ENCODE measurements at regions of chr9 and their contacts with region 1.

Region 1: GRCh38 chr9:33404788-33405362 is 2.5 kb upstream of the AQP7 start:
- DNase-seq: no peak
- ATAC-seq: no peak
- H3K4me3 Mint-ChIP-seq: no peak overlapping the region
- H3K27ac Mint-ChIP-seq: no peak overlapping the region
- H3K4me1 Mint-ChIP-seq: no peaks in the 10 kb centered on the region
- H3K27me3 Mint-ChIP-seq: no peaks in the 10 kb centered on the region

Region 2: GRCh38 chr9:33239921-33240320 is 165.0 kb before region 1 on chr9 and contains the start of gene SPINK4:
- CTCF ChIA-PET with region 1: no interaction called
- DNase-seq: no peak
- ATAC-seq: no peak
- H3K4me3 Mint-ChIP-seq: no peak within 1 kb of the TSS
- H3K27ac Mint-ChIP-seq: peak within 1 kb of the TSS; percentile 17
- H3K4me1 Mint-ChIP-seq: peaks cover 8% of the 10 kb centered on the region
- H3K27me3 Mint-ChIP-seq: peaks cover 7% of the 10 kb centered on the region
- total RNA-seq, gene SPINK4: not detected

Region 3: DNA sequence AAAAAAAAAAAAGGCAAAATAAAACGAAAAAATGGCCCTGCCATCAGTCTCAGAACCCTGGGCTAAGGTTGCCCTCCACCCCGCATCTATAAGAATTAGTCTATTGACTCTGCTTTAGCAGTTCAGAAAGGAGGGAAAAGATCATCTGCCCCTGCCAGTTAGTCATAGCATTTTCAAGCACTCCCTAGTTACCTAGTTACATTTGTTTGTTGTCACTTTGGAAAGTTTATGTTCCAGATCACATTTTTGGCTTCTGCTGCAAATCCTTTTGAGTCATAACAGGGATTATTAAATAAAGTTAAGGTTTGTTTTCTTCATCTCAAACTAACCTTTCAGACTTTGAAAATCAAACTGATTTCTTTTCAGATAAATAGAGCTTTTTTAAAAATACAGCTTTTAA is 54.6 kb before region 1 on chr9:
- CTCF ChIA-PET with region 1: no interaction called
- DNase-seq: no peak
- ATAC-seq: no peak
- H3K4me3 Mint-ChIP-seq: no peak overlapping the region
- H3K27ac Mint-ChIP-seq: peak overlapping the region; percentile 12
- H3K4me1 Mint-ChIP-seq: no peaks in the 10 kb centered on the region
- H3K27me3 Mint-ChIP-seq: no peaks in the 10 kb centered on the region

Region 4: GRCh38 chr9:33458444-33458843 is 53.6 kb after region 1 on chr9:
- CTCF ChIA-PET with region 1: interaction called, 135 read pairs
- DNase-seq: peak; percentile 70
- ATAC-seq: peak; percentile 74
- H3K4me3 Mint-ChIP-seq: no peak overlapping the region
- H3K27ac Mint-ChIP-seq: peak overlapping the region; percentile 79
- H3K4me1 Mint-ChIP-seq: peaks cover 46% of the 10 kb centered on the region
- H3K27me3 Mint-ChIP-seq: no peaks in the 10 kb centered on the region

Region 5: DNA sequence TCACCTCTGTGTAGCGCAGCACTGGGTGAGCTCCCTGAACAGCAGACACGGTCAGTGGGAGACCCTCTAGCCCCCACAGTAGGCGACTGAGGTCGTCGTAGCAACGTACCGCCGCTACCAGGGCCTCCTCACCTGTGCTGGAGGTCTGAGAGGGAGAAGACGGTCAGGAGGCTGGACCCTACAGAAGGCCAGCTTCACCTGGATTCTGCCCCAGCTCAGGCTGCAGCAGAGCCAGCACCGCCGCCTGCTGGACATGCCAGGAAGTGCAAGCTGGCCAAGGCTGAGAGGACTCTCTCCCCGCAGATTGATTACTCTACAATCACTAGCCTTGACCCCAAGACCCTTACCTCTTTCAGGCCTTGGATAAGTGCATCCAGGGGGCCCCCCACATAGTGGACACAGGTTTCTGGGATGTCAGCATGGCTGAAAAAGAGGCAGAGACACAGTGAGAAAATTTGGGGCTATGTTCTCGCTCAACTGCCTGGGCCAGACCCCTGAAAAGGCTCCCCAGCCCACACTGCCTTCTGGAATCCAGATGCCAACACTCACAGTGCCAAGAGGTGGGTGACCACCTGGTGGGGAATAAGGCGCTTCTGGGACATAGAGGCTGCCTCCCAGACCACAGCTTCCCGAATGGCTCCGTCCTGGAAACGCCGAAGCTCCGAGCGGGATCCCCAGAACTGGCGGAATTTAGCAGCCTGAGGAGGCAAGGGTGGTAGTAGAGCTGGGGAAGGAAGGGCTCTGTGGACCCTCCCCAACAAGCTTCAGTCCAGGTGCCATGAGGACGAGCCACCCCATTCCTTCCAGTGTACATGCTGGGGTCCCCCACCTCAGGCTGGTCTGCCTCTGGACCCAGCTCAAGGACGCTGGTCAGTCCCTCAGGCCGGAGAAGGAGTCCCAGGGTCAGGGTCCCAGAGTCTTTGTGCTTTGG is 62.0 kb after region 1 on chr9:
- CTCF ChIA-PET with region 1: interaction called, 78 read pairs
- DNase-seq: peak; percentile 78
- ATAC-seq: peak; percentile 81
- H3K4me3 Mint-ChIP-seq: no peak overlapping the region
- H3K27ac Mint-ChIP-seq: no peak overlapping the region
- H3K4me1 Mint-ChIP-seq: peaks cover 8% of the 10 kb centered on the region
- H3K27me3 Mint-ChIP-seq: no peaks in the 10 kb centered on the region

Region 6: DNA sequence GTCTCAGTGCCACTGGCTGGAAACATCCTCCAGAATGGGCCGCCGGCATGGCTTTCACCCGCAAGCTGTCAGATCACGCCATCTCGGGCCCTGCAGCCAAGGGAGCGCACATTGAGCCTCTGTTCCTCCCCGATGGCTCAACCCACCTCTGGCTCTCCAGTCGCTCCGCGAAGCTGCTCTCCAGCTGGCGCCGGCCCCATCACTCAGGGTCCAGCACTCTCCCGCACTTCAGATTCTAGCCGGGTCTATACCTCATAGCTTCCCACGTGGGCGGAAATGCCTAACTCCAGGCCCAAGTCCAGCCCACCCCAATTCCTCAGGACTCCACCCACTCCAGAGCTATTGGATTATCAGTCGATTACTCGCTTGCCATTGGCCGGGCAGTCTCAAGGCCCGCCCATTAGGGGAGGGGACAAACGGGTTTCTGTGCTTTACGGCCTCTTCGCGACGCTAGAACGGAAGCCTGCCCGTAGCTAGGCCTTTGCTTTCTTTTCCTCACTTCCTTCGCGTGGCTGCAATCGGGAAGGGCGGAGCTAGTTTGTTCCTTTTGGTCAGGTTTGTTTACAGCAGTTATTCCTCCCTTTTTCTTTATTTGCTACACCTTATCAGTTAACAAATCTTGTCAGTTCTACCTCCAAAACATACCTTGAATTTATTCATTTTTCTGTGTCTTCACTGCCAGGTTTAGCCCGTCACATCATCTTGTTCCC is 68.9 kb after region 1 on chr9 and contains the start of gene NOL6:
- CTCF ChIA-PET with region 1: interaction called, 14 read pairs
- DNase-seq: peak; percentile 99
- ATAC-seq: peak; percentile 100
- H3K4me3 Mint-ChIP-seq: peak within 1 kb of the TSS; percentile 98
- H3K27ac Mint-ChIP-seq: peak within 1 kb of the TSS; percentile 91
- H3K4me1 Mint-ChIP-seq: peaks cover 30% of the 10 kb centered on the region
- H3K27me3 Mint-ChIP-seq: no peaks in the 10 kb centered on the region
- total RNA-seq, gene NOL6: 34.3 to 43.1 TPM

Measured in activated CD8-positive, alpha-beta memory T cell treated with anti-CD3 and anti-CD28 coated beads, Interleukin-2, amount 10 ng/mL, durations not matched to agents 7 days and 5 days (primary cell).